GM12878 (cell line): ENCODE measurements at regions of chr12 and their contacts with region 1.

Region 1: GRCh38 chr12:7638760-7639555 is 26.8 kb downstream of the APOBEC1 start:
- DNase-seq: peak; percentile 40
- ATAC-seq: peak; percentile 94
- H3K4me3 ChIP-seq: no peak overlapping the region
- H3K27ac ChIP-seq: no peak overlapping the region
- H3K4me1 ChIP-seq: no peaks in the 10 kb centered on the region
- H3K27me3 ChIP-seq: no peaks in the 10 kb centered on the region
- CTCF ChIP-seq: peak; percentile 64 to 91 (median 77); a peak in 5 of 6 replicates
- EP300 ChIP-seq: no peak
- POLR2A ChIP-seq: no peak
- RAD21 ChIP-seq: peak; percentile 86

Region 2: DNA sequence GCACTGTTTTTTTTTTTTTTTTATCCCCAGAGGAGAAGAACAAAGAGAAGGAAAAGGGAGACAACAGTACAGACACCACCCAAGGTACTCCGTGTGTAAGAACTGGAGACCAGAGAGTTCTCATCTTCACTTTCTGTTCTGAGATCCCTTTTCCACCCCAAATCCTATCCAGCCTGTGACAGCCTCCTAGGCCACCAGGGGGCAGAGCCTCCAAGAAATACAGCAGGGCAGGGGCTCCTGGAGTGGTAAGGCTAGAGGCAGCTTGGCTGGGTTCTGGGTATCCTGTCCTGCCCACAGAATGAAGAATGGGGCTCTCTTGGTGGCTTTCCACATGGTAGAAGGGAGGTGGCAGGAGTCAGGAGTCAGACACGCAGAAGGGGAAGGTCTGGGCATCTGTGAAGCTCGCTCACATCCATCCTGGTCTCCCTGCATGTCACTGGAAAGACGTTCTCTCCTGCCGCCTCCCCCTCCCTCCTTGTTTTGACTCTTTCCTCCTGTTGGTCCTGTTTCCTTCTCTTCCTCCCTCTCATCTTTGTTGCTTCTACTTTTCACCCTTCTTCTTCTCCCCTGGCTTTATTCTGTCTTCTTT is 496.8 kb before region 1 on chr12:
- CTCF ChIA-PET with region 1: no interaction called
- POLR2A ChIA-PET with region 1: no interaction called
- RAD21 ChIA-PET with region 1: no interaction called
- SMC1A ChIA-PET with region 1: no interaction called
- in situ Hi-C with region 1: no loop called
- intact Hi-C with region 1: loop called (anchors 5 kb)
- DNase-seq: no peak
- ATAC-seq: peak; percentile 95
- H3K4me3 ChIP-seq: no peak overlapping the region
- H3K27ac ChIP-seq: no peak overlapping the region
- H3K4me1 ChIP-seq: no peaks in the 10 kb centered on the region
- H3K27me3 ChIP-seq: no peaks in the 10 kb centered on the region
- CTCF ChIP-seq: peak; percentile 55 to 68 (median 59); a peak in 5 of 6 replicates
- EP300 ChIP-seq: no peak
- POLR2A ChIP-seq: no peak
- RAD21 ChIP-seq: peak; percentile 57

Region 3: GRCh38 chr12:7219599-7220243 is 419.2 kb before region 1 on chr12:
- CTCF ChIA-PET with region 1: interaction called, 9 read pairs
- POLR2A ChIA-PET with region 1: no interaction called
- RAD21 ChIA-PET with region 1: interaction called, 4 read pairs
- SMC1A ChIA-PET with region 1: interaction called, 6 read pairs
- in situ Hi-C with region 1: loop called (anchors 5 kb)
- intact Hi-C with region 1: loop called (anchors 1 kb)
- DNase-seq: peak; percentile 19
- ATAC-seq: peak; percentile 86
- H3K4me3 ChIP-seq: no peak overlapping the region
- H3K27ac ChIP-seq: no peak overlapping the region
- H3K4me1 ChIP-seq: no peaks in the 10 kb centered on the region
- H3K27me3 ChIP-seq: no peaks in the 10 kb centered on the region
- CTCF ChIP-seq: peak; percentile 76 to 95 (median 85)
- EP300 ChIP-seq: no peak
- POLR2A ChIP-seq: no peak
- RAD21 ChIP-seq: peak; percentile 95

Region 4: GRCh38 chr12:7319930-7320329 is 319.0 kb before region 1 on chr12:
- CTCF ChIA-PET with region 1: no interaction called
- POLR2A ChIA-PET with region 1: no interaction called
- RAD21 ChIA-PET with region 1: no interaction called
- SMC1A ChIA-PET with region 1: no interaction called
- in situ Hi-C with region 1: no loop called
- intact Hi-C with region 1: no loop called
- DNase-seq: no peak
- ATAC-seq: no peak
- H3K4me3 ChIP-seq: no peak overlapping the region
- H3K27ac ChIP-seq: no peak overlapping the region
- H3K4me1 ChIP-seq: no peaks in the 10 kb centered on the region
- H3K27me3 ChIP-seq: no peaks in the 10 kb centered on the region
- CTCF ChIP-seq: no peak; a peak in 1 of 6 replicates
- EP300 ChIP-seq: no peak
- POLR2A ChIP-seq: no peak
- RAD21 ChIP-seq: no peak

Region 5: DNA sequence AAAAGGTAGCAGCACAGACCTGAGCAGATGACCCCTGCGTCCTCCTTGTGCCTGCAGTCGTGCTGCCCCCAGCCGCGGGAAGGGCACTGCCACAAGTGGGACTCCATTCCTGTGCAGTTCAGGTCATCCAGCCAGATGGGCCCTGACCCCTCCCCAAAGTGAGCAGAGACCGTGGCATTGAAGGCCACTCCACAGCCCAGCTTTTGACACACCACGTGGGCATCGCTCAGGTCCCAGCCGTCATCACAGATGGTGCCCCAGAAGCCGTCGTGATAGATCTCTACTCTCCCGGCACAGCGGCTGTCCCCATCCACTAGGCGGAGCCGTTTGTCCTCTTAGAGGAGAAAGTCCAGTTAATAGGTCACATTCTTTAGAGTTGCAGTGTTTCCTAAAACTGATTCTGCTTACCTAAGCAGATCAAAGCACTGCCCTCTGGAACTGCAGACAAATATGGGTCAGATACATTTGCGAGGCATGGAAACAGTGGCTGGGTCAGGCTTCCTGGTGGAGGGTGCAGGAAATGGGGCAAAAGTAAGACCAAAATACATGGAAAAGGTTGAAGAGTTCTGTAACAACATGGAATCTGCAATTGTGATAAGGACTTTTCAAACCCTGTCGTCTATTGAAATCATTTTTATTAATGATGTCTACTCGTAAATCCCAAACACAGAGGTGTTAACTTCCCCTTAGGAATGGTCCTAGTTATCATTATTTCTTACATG is 264.4 kb before region 1 on chr12:
- CTCF ChIA-PET with region 1: no interaction called
- POLR2A ChIA-PET with region 1: no interaction called
- RAD21 ChIA-PET with region 1: no interaction called
- SMC1A ChIA-PET with region 1: no interaction called
- in situ Hi-C with region 1: no loop called
- intact Hi-C with region 1: loop called (anchors 5 kb)
- DNase-seq: no peak
- ATAC-seq: peak; percentile 84
- H3K4me3 ChIP-seq: no peak overlapping the region
- H3K27ac ChIP-seq: no peak overlapping the region
- H3K4me1 ChIP-seq: no peaks in the 10 kb centered on the region
- H3K27me3 ChIP-seq: no peaks in the 10 kb centered on the region
- CTCF ChIP-seq: peak; percentile 55 to 70 (median 62)
- EP300 ChIP-seq: no peak
- POLR2A ChIP-seq: no peak
- RAD21 ChIP-seq: peak; percentile 38

Region 6: DNA sequence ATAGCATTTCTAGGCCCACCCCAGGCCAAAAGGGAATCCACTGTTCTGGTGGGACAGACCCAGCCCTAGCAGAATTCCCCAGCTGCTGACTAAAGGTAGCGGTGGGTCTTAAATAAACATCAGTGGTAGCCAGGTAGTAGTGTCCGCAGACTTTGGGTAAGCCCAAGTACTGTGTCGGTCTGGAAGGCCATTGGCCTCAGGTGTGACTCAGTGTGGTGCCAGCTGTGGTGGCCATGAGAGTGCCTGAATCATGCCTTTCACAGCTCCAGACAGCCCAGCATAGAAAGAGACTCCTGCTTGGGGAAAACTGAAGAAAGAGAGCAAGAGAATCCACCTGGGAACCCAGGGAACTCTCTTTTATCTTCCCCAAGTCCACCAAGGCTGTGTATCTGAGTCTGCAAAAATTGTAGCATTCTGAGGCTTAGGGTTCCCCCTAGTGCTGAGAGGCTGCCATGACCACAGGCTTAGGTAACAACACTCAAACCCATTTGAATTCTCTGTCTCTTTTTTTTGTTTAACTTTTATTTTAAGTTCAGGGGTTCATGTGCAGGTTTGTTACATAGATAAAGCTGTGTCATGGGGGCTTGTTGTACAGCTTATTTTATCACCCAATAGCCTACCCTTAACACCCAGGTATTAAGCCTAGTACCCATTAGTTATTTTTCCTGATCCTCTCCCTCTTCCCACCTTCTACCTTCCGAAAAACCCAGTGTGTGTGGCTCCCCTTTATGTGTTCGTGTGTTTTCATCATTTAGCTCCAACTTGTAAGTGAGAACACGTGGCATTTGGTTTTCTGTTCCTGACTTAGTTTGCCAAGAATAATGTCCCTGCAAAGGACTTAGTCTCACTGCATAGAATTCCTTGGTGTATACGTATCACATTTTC is 178.3 kb before region 1 on chr12:
- CTCF ChIA-PET with region 1: interaction called, 4 read pairs
- POLR2A ChIA-PET with region 1: no interaction called
- RAD21 ChIA-PET with region 1: no interaction called
- SMC1A ChIA-PET with region 1: no interaction called
- in situ Hi-C with region 1: no loop called
- intact Hi-C with region 1: loop called (anchors 1 kb)
- DNase-seq: no peak
- ATAC-seq: peak; percentile 92
- H3K4me3 ChIP-seq: no peak overlapping the region
- H3K27ac ChIP-seq: no peak overlapping the region
- H3K4me1 ChIP-seq: no peaks in the 10 kb centered on the region
- H3K27me3 ChIP-seq: no peaks in the 10 kb centered on the region
- CTCF ChIP-seq: peak; percentile 81 to 87 (median 84)
- EP300 ChIP-seq: no peak
- POLR2A ChIP-seq: no peak
- RAD21 ChIP-seq: peak; percentile 88

Region 7: GRCh38 chr12:7583571-7583970 is 55.4 kb before region 1 on chr12:
- CTCF ChIA-PET with region 1: interaction called, 7 read pairs
- POLR2A ChIA-PET with region 1: no interaction called
- RAD21 ChIA-PET with region 1: interaction called, 3 read pairs
- SMC1A ChIA-PET with region 1: no interaction called
- in situ Hi-C with region 1: no loop called
- intact Hi-C with region 1: loop called (anchors 1 kb)
- DNase-seq: no peak
- ATAC-seq: no peak
- H3K4me3 ChIP-seq: no peak overlapping the region
- H3K27ac ChIP-seq: no peak overlapping the region
- H3K4me1 ChIP-seq: no peaks in the 10 kb centered on the region
- H3K27me3 ChIP-seq: no peaks in the 10 kb centered on the region
- CTCF ChIP-seq: no peak
- EP300 ChIP-seq: no peak
- POLR2A ChIP-seq: no peak
- RAD21 ChIP-seq: no peak